H1 (cell line): ENCODE measurements at regions of chr2 and their contacts with region 1.

Region 1: GRCh38 chr2:233199870-233200269 is 51.6 kb upstream of the ATG16L1 start:
- DNase-seq: no peak
- H3K4me3 ChIP-seq: no peak overlapping the region
- H3K27ac ChIP-seq: no peak overlapping the region
- H3K4me1 ChIP-seq: peaks cover 0 to 3% (median under 1%) of the 10 kb centered on the region in 4 experiments; a peak in 2 of 7 replicates
- H3K27me3 ChIP-seq: no peaks in the 10 kb centered on the region; a peak in 1 of 7 replicates
- CTCF ChIP-seq: peak in 1 of 3 experiments; percentile 20; a peak in 1 of 4 replicates
- EP300 ChIP-seq: no peak
- POLR2A ChIP-seq: no peak
- RAD21 ChIP-seq: peak in 1 of 2 experiments; percentile 10; a peak in 2 of 4 replicates

Region 2: DNA sequence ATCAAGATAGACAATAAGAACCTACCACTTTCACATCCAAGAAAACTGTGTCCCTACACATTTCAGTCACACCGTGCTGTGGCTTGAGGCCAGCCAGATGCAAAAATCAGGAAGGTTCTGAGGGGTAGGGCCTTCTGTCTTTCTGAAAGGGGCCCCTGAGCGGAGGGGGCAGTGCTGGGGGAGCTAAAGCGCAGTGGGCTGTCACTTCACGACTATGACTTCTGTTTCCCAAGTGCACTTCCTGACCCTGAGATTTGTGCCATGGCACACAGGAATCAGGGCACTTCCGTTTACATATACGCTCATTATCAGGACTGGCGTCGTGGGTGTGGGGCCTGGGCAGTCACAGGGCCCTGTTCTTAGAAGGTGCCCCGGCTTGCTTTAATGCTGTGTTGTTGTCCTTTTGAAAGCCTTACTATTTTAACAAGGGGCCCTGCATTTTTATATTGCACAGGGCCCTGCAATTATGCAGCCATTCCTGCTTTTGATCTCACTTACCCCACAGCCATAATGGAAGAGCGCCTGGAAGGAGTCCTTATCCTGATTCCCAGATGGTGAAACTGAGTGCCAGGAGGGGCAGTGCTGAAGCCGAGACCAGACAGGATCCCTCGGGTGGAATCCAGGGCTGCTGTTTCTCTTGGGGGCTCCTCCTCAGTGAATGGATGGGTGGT is 187.4 kb before region 1 on chr2:
- CTCF ChIA-PET with region 1: no interaction called
- POLR2A ChIA-PET with region 1: no interaction called
- DNase-seq: no peak
- H3K4me3 ChIP-seq: no peak overlapping the region
- H3K27ac ChIP-seq: no peak overlapping the region
- H3K4me1 ChIP-seq: no peaks in the 10 kb centered on the region
- H3K27me3 ChIP-seq: no peaks in the 10 kb centered on the region
- CTCF ChIP-seq: no peak
- EP300 ChIP-seq: no peak
- POLR2A ChIP-seq: no peak
- RAD21 ChIP-seq: no peak

Region 3: GRCh38 chr2:233185330-233185729 is 14.5 kb before region 1 on chr2:
- CTCF ChIA-PET with region 1: interaction called, 13 read pairs
- POLR2A ChIA-PET with region 1: no interaction called
- DNase-seq: no peak
- H3K4me3 ChIP-seq: no peak overlapping the region
- H3K27ac ChIP-seq: no peak overlapping the region
- H3K4me1 ChIP-seq: peaks cover 0 to 4% (median 0%) of the 10 kb centered on the region in 4 experiments; a peak in 2 of 7 replicates
- H3K27me3 ChIP-seq: no peaks in the 10 kb centered on the region
- CTCF ChIP-seq: no peak
- EP300 ChIP-seq: no peak
- POLR2A ChIP-seq: no peak
- RAD21 ChIP-seq: no peak

Region 4: DNA sequence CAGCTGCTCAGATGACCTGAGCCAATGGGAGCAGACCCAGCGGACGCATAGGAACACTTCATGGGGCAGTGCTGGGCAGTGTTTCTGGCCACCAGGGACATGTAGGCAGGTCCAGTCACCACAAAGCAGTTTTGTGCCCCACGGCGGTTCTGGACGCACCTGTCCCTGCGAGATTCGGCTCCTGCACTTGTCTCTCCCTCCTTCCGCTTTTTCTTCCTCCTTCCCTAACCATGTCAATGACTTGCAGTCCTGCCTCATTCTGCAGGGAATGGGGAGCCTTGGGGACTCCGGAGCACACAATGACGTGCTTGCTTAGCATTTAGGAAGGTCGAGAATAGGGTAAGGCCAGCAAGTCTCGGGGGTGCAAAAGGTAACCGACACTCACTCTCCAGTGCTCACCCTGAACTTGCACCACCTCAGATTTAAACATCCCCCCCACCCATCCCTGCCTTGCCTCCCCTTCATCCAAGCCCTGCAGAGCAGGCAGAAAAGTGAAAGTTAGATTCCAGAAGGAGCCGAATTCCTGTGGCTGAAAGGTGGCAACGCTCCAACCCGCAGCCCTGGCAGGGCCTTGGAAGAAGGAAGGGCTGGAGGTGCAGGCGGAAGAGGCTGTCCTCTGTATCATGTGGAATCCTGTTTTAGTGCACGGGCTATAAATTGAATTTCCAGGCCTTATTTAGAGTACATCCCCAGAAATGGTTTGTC is 11.1 kb after region 1 on chr2:
- CTCF ChIA-PET with region 1: interaction called, 13 read pairs
- POLR2A ChIA-PET with region 1: no interaction called
- DNase-seq: no peak
- H3K4me3 ChIP-seq: no peak overlapping the region
- H3K27ac ChIP-seq: no peak overlapping the region
- H3K4me1 ChIP-seq: peaks cover 6 to 18% (median 16%) of the 10 kb centered on the region in 4 experiments
- H3K27me3 ChIP-seq: no peaks in the 10 kb centered on the region
- CTCF ChIP-seq: no peak
- EP300 ChIP-seq: no peak
- POLR2A ChIP-seq: no peak
- RAD21 ChIP-seq: no peak

Region 5: GRCh38 chr2:233234264-233234663 is 34.4 kb after region 1 on chr2:
- CTCF ChIA-PET with region 1: interaction called, 11 read pairs
- POLR2A ChIA-PET with region 1: no interaction called
- DNase-seq: no peak
- H3K4me3 ChIP-seq: no peak overlapping the region
- H3K27ac ChIP-seq: no peak overlapping the region
- H3K4me1 ChIP-seq: no peaks in the 10 kb centered on the region; a peak in 1 of 7 replicates
- H3K27me3 ChIP-seq: no peaks in the 10 kb centered on the region
- CTCF ChIP-seq: no peak
- EP300 ChIP-seq: no peak
- POLR2A ChIP-seq: no peak
- RAD21 ChIP-seq: no peak